Motor neuron (in vitro differentiated cells): ENCODE measurements at regions of chr2 and their contacts with region 1.

Region 1: GRCh38 chr2:12931186-12931844 is 214.6 kb downstream of the TRIB2 start:
- ATAC-seq: peak; percentile 11 to 63 (median 41)
- H3K4me3 ChIP-seq: no peak overlapping the region
- H3K27ac ChIP-seq: no peak overlapping the region
- H3K4me1 ChIP-seq: peaks cover 20 to 23% of the 10 kb centered on the region in 2 donors

Region 2: GRCh38 chr2:12709207-12709522 is 222.2 kb before region 1 on chr2:
- in situ Hi-C with region 1: no loop called
- ATAC-seq: no peak
- H3K4me3 ChIP-seq: no peak overlapping the region
- H3K27ac ChIP-seq: no peak overlapping the region
- H3K4me1 ChIP-seq: peaks cover under 1 to 7% of the 10 kb centered on the region in 2 donors

Region 3: GRCh38 chr2:12728221-12728777 is 203.0 kb before region 1 on chr2:
- in situ Hi-C with region 1: loop called in 1 of 9 experiments (anchors 25 kb)
- ATAC-seq: no peak
- H3K4me3 ChIP-seq: no peak overlapping the region
- H3K27ac ChIP-seq: no peak overlapping the region
- H3K4me1 ChIP-seq: peaks cover under 1 to 9% of the 10 kb centered on the region in 2 donors